ENCODE measurements at regions of chr11 and their contacts with region 1.

Region 1: GRCh38 chr11:47233989-47234668 is 14.5 kb downstream of the ACP2 start:
- DNase-seq: peak; percentile 52
- H3K4me3 ChIP-seq: no peak overlapping the region
- H3K27ac ChIP-seq: peak overlapping the region; percentile 2
- H3K4me1 ChIP-seq: peaks cover 19% of the 10 kb centered on the region
- H3K27me3 ChIP-seq: no peaks in the 10 kb centered on the region
- CTCF ChIP-seq: peak in 1 of 2 donors; percentile 34

Region 2: DNA sequence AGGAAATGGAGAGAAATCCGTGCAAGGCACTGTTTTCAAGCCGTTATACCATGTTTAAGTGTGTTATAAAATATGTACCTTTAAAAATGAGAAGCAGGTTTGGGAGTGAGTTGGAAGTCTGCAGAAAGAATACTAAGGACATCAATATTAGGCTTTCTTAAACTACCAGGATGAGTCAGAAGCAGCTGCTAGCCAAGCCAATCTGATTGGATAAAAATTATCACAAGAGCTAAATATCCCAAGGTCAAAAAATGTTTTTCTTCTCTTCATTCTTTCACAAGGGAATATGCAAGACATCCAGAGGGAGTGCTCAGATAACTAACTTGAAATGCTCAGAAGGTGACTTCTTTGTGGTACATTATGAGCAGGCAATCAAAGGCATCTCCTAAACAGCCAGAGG is 368.8 kb before region 1 on chr11:
- CTCF ChIA-PET with region 1: interaction called, 14 read pairs
- dilution Hi-C with region 1: no loop called
- in situ Hi-C with region 1: no loop called
- intact Hi-C with region 1: no loop called
- DNase-seq: no peak
- H3K4me3 ChIP-seq: no peak overlapping the region
- H3K27ac ChIP-seq: no peak overlapping the region
- H3K4me1 ChIP-seq: no peaks in the 10 kb centered on the region
- H3K27me3 ChIP-seq: no peaks in the 10 kb centered on the region
- CTCF ChIP-seq: no peak

Region 3: GRCh38 chr11:47213985-47214564 is 20.1 kb before region 1 on chr11:
- CTCF ChIA-PET with region 1: no interaction called
- dilution Hi-C with region 1: no loop called
- in situ Hi-C with region 1: no loop called
- intact Hi-C with region 1: loop called (anchors 2 kb)
- DNase-seq: peak; percentile 89
- H3K4me3 ChIP-seq: peak overlapping the region; percentile 8 to 47 (median 38)
- H3K27ac ChIP-seq: peak overlapping the region; percentile 73
- H3K4me1 ChIP-seq: peaks cover 16% of the 10 kb centered on the region
- H3K27me3 ChIP-seq: no peaks in the 10 kb centered on the region
- CTCF ChIP-seq: no peak

Region 4: GRCh38 chr11:47329987-47330931 is 96.1 kb after region 1 on chr11:
- CTCF ChIA-PET with region 1: no interaction called
- dilution Hi-C with region 1: loop called (anchors 5 kb)
- in situ Hi-C with region 1: no loop called
- intact Hi-C with region 1: no loop called
- DNase-seq: no peak
- H3K4me3 ChIP-seq: no peak overlapping the region
- H3K27ac ChIP-seq: no peak overlapping the region
- H3K4me1 ChIP-seq: no peaks in the 10 kb centered on the region
- H3K27me3 ChIP-seq: no peaks in the 10 kb centered on the region
- CTCF ChIP-seq: peak in 1 of 2 donors; percentile 3

Region 5: DNA sequence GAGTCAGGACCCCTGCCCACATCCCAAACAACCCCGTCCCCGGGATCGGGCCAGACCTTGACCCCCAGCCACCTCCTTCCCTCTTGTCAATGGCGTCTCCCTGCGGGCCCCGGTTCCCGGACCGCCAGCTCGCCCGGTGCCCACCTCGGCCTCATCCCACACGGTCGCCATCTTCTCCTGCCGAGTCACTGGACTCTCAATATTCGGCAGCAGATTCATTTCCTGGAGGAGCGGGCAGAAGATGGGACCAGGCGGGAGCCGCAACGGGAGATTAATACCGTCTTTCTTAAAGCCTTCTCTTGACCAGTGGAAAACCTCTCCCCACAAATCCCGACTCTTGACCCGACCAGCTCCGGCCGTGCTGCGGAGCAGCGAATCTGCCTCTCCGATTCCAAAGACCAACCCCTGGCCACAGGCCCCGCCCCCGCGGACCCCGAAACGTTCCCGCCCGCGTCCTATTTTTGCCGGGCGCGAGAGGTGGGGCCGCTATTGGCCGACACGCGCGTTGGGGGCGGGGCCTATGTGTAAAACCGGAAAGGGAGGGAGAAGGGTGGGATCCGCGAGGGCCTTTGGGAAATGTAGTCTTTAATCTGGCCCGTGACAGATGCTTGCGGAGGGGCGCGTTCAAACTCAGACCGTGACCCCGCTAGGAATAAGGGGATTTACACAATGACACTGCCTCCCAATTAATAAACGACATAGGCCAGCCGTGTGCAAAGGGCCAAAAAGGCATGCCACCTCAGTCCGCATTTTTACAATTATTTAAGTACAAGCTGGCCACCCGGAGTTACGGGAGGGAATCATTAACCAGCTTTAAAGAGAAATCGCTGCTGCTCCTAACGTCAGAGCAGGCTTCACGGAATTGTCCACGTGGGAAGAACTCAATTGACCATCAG is 192.2 kb after region 1 on chr11 and contains the start of gene PSMC3:
- CTCF ChIA-PET with region 1: no interaction called
- dilution Hi-C with region 1: no loop called
- in situ Hi-C with region 1: no loop called
- intact Hi-C with region 1: no loop called
- DNase-seq: peak; percentile 95
- H3K4me3 ChIP-seq: peak within 1 kb of the TSS; percentile 88 to 99 (median 97)
- H3K27ac ChIP-seq: peak within 1 kb of the TSS; percentile 94
- H3K4me1 ChIP-seq: peaks cover 14% of the 10 kb centered on the region
- H3K27me3 ChIP-seq: no peaks in the 10 kb centered on the region
- CTCF ChIP-seq: no peak
- total RNA-seq, gene PSMC3: 72.7 to 142 TPM